Right ventricle myocardium superior (tissue), 1 donor: ENCODE measurements at regions of chr11 and their contacts with region 1.

Region 1: GRCh38 chr11:61102667-61103571 is 630 bp downstream of the CD5 start:
- DNase-seq: no peak
- ATAC-seq: no peak

Region 2: DNA sequence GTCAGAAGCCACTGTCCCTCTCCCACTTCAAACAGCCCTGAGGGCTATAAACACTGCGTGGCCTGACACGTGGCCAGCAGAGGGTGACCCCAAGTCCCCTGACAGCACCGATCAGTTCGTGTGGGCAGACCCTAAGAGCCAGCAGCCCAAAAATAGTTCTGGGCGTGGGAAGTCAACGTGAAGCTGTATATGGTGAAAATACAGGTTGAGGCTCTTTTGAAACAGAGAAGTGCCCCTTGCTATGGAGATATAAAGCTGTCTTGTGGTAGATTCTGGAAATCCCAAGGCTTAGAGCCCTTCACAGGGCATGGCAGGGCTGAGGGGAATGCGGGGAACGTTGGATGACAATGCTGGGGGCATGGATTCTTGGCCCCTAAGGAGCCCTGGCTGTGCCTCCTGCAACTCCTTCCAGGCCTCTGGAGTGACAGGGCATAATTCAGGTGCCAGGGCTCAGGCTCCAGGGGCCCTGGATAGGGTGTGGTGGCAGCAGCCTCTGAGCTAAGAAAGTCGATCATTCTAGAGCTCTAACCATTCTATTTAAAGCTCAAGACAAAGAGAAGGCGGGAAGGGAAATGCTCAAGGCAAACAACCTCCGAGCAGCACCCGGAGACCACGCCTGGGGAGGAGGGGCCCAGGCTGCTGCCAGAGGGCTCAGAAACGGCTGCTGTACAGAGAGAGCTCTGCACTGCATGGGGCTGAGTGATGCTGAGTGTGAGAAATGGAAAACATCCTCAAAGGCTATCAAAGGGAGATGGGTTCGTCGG is 61.0 kb before region 1 on chr11:
- intact Hi-C with region 1: loop called (anchors 10 kb)
- DNase-seq: peak; percentile 61
- ATAC-seq: peak; percentile 41